GM12878 (cell line): ENCODE measurements at regions of chr12 and their contacts with region 1.

Region 1: DNA sequence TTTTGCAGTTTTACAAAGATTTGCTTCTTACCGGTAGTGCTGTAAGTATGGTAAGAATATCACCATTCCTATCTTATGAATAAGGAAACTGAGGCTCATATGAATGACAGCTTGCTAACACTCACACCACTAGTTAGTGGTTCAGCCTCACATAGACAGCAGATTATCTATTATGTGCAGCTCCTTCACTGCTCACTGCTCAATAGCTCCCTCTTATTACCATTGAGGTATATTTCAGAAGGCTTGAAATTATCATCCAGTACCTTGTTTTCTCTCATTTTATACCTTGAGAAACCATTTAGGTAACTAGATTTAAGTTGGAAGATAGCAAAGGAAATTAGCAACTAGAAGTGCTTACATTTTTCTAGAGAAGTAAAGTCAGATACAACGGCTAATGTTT is 15.5 kb downstream of the RIC8B start:
- DNase-seq: no peak
- ATAC-seq: peak; percentile 69
- H3K4me3 ChIP-seq: no peak overlapping the region
- H3K27ac ChIP-seq: no peak overlapping the region
- H3K4me1 ChIP-seq: no peaks in the 10 kb centered on the region
- H3K27me3 ChIP-seq: no peaks in the 10 kb centered on the region
- CTCF ChIP-seq: peak in 2 of 3 experiments; percentile 13 to 27; a peak in 1 of 6 replicates
- EP300 ChIP-seq: no peak
- POLR2A ChIP-seq: no peak
- RAD21 ChIP-seq: peak; percentile 29

Region 2: GRCh38 chr12:106760184-106760531 is 29.9 kb before region 1 on chr12:
- CTCF ChIA-PET with region 1: no interaction called
- POLR2A ChIA-PET with region 1: interaction called, 12 read pairs
- RAD21 ChIA-PET with region 1: interaction called, 3 read pairs
- SMC1A ChIA-PET with region 1: interaction called, 3 read pairs
- in situ Hi-C with region 1: no loop called
- intact Hi-C with region 1: no loop called
- DNase-seq: peak; percentile 65
- ATAC-seq: peak; percentile 98
- H3K4me3 ChIP-seq: peak overlapping the region; percentile 57
- H3K27ac ChIP-seq: peak overlapping the region; percentile 97
- H3K4me1 ChIP-seq: peaks cover 37% of the 10 kb centered on the region
- H3K27me3 ChIP-seq: no peaks in the 10 kb centered on the region
- CTCF ChIP-seq: no peak
- EP300 ChIP-seq: no peak
- POLR2A ChIP-seq: peak; percentile 81
- RAD21 ChIP-seq: no peak

Region 3: GRCh38 chr12:106774808-106775765 is 14.9 kb before region 1 on chr12:
- CTCF ChIA-PET with region 1: interaction called, 10 read pairs
- POLR2A ChIA-PET with region 1: interaction called, 4 read pairs
- RAD21 ChIA-PET with region 1: no interaction called
- SMC1A ChIA-PET with region 1: interaction called, 13 read pairs
- in situ Hi-C with region 1: no loop called
- intact Hi-C with region 1: no loop called
- DNase-seq: no peak
- ATAC-seq: peak; percentile 37
- H3K4me3 ChIP-seq: peak overlapping the region; percentile 73
- H3K27ac ChIP-seq: peak overlapping the region; percentile 71
- H3K4me1 ChIP-seq: no peaks in the 10 kb centered on the region
- H3K27me3 ChIP-seq: no peaks in the 10 kb centered on the region
- CTCF ChIP-seq: no peak
- EP300 ChIP-seq: no peak
- POLR2A ChIP-seq: no peak
- RAD21 ChIP-seq: no peak

Region 4: GRCh38 chr12:106801830-106802533 is 12.0 kb after region 1 on chr12:
- CTCF ChIA-PET with region 1: interaction called, 13 read pairs
- POLR2A ChIA-PET with region 1: interaction called, 6 read pairs
- RAD21 ChIA-PET with region 1: interaction called, 8 read pairs
- SMC1A ChIA-PET with region 1: interaction called, 9 read pairs
- in situ Hi-C with region 1: no loop called
- intact Hi-C with region 1: no loop called
- DNase-seq: no peak
- ATAC-seq: no peak
- H3K4me3 ChIP-seq: no peak overlapping the region
- H3K27ac ChIP-seq: no peak overlapping the region
- H3K4me1 ChIP-seq: no peaks in the 10 kb centered on the region
- H3K27me3 ChIP-seq: no peaks in the 10 kb centered on the region
- CTCF ChIP-seq: no peak
- EP300 ChIP-seq: no peak
- POLR2A ChIP-seq: no peak
- RAD21 ChIP-seq: no peak